ENCODE measurements at regions of chr13 and their contacts with region 1.

Region 1: GRCh38 chr13:32905063-32905863 is 111.0 kb upstream of the KL start:
- DNase-seq: no peak
- H3K4me3 Mint-ChIP-seq: peak overlapping the region; percentile 69
- H3K27ac Mint-ChIP-seq: peak overlapping the region; percentile 83
- H3K4me1 Mint-ChIP-seq: peaks cover 32% of the 10 kb centered on the region
- H3K27me3 Mint-ChIP-seq: peaks cover 4% of the 10 kb centered on the region

Region 2: GRCh38 chr13:32315238-32316027 is 589.8 kb before region 1 on chr13 and contains the starts of genes BRCA2 and ZAR1L:
- intact Hi-C with region 1: loop called (anchors 5 kb)
- DNase-seq: peak; percentile 86
- H3K4me3 Mint-ChIP-seq: peak within 1 kb of the TSS; percentile 96
- H3K27ac Mint-ChIP-seq: peak within 1 kb of the TSS; percentile 100
- H3K4me1 Mint-ChIP-seq: peaks cover 48% of the 10 kb centered on the region
- H3K27me3 Mint-ChIP-seq: no peaks in the 10 kb centered on the region
- total RNA-seq, gene BRCA2: 16.7 and 18.9 TPM in 2 replicates
- total RNA-seq, gene ZAR1L: not detected in 2 replicates

Region 3: GRCh38 chr13:32650705-32651311 is 254.5 kb before region 1 on chr13:
- intact Hi-C with region 1: loop called (anchors 1 kb)
- DNase-seq: peak; percentile 42
- H3K4me3 Mint-ChIP-seq: no peak overlapping the region
- H3K27ac Mint-ChIP-seq: no peak overlapping the region
- H3K4me1 Mint-ChIP-seq: peaks cover 52% of the 10 kb centered on the region
- H3K27me3 Mint-ChIP-seq: no peaks in the 10 kb centered on the region

Region 4: DNA sequence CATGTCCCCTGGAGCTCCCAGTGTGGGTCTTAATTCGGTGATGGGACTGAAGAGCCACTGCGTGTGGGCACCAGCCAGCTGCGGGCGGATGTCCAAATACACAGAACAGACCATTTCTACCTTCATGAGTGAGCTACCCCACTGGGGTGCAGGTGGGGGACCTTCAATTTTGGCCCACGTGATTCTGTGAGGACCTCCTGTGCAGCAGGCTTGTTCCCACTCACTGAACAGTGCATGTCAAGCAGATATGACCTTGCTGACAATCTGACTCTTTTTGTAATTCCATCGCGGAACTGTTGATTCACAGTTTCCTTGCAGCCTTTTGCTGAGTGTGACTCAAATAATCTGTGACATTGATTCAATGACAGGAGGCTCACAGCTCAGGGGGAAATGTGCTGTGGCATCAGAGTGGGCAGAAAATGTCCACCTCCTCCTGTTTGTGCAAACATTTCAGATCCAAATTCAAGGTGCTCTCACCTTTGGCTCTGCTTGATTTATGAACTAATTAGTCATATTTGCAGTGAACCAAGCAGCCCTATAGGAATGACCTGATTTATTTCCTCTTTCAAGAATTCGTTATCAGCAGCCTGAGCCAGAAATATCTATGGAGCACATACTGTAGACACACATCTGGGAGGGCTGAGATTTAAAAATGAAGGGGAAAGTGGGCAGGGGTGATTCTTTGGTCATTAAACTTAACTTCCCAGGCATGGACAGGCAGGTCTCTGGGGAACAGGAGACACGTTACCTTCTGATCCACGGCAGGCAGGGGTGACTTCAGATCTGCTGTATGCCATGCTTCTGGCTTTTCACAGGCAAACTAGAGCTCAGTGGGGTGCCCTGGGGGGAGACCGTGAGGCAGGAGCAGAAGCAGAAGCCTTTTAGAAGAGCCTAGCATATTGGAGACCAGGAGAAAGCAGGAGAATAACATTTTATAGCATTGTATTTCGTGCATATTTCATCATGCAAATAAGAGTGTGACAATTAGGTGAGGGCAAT is 59.0 kb before region 1 on chr13:
- intact Hi-C with region 1: no loop called
- DNase-seq: no peak
- H3K4me3 Mint-ChIP-seq: no peak overlapping the region
- H3K27ac Mint-ChIP-seq: no peak overlapping the region
- H3K4me1 Mint-ChIP-seq: peaks cover 7% of the 10 kb centered on the region
- H3K27me3 Mint-ChIP-seq: peaks cover 6% of the 10 kb centered on the region

Region 5: DNA sequence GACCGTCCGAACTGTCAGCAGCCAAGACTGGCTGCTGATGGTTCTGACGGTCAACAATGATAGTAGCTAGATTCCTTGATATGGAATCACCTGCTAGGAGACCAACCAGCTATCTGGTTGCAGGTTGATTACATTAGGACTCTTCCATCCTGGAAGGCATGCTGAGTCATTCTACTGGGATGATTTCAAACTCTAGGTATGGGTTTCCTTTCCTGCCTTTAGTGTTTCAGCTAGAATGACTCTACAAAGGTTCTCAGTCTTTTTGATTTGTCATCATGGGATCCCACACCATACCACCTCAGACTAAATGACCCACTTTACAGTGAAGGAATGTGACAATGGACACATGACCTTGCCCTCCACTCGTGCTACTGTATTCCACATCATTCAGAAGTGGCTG is 27.1 kb before region 1 on chr13:
- intact Hi-C with region 1: loop called (anchors 2 kb)
- DNase-seq: no peak
- H3K4me3 Mint-ChIP-seq: no peak overlapping the region
- H3K27ac Mint-ChIP-seq: no peak overlapping the region
- H3K4me1 Mint-ChIP-seq: no peaks in the 10 kb centered on the region
- H3K27me3 Mint-ChIP-seq: peaks cover 2% of the 10 kb centered on the region

Region 6: GRCh38 chr13:33188093-33188882 is 283.0 kb after region 1 on chr13:
- intact Hi-C with region 1: loop called (anchors 1 kb)
- DNase-seq: no peak
- H3K4me3 Mint-ChIP-seq: peak overlapping the region; percentile 34
- H3K27ac Mint-ChIP-seq: peak overlapping the region; percentile 99
- H3K4me1 Mint-ChIP-seq: peaks cover 52% of the 10 kb centered on the region
- H3K27me3 Mint-ChIP-seq: no peaks in the 10 kb centered on the region

Region 7: GRCh38 chr13:33828431-33829129 is 923.3 kb after region 1 on chr13:
- intact Hi-C with region 1: loop called (anchors 10 kb)
- DNase-seq: no peak
- H3K4me3 Mint-ChIP-seq: no peak overlapping the region
- H3K27ac Mint-ChIP-seq: peak overlapping the region; percentile 80
- H3K4me1 Mint-ChIP-seq: peaks cover 31% of the 10 kb centered on the region
- H3K27me3 Mint-ChIP-seq: no peaks in the 10 kb centered on the region

Measured in activated T-helper 1 cell treated with anti-CD3 and anti-CD28 coated beads, Interleukin-12 subunit alpha, Interleukin-12 subunit beta, Interleukin-2, Interleukin-4 antibody, amounts not matched to agents 30 ng/mL and 10 ng/mL and 1 ng/mL, durations not matched to agents 14 hours and 24 hours and 36 hours (primary cell).